ENCODE measurements at regions of chr7 and their contacts with region 1.

Region 1: GRCh38 chr7:112206238-112207044 is at the starts of genes DOCK4 and ZNF277:
- DNase-seq: peak; percentile 97
- ATAC-seq: peak; percentile 92
- H3K4me3 ChIP-seq: peak within 1 kb of the TSS; percentile 96 to 98 (median 96)
- H3K27ac ChIP-seq: peak within 1 kb of the TSS; percentile 84
- H3K4me1 ChIP-seq: peaks cover 60% of the 10 kb centered on the region
- H3K27me3 ChIP-seq: no peaks in the 10 kb centered on the region; a peak in 1 of 5 replicates
- CTCF ChIP-seq: peak; percentile 42
- EP300 ChIP-seq: peak in 1 of 2 experiments; percentile 31; a peak in 1 of 4 replicates
- POLR2A ChIP-seq: peak; percentile 72 to 73
- RAD21 ChIP-seq: peak; percentile 52
- total RNA-seq, gene DOCK4: 13.5 and 19.1 TPM in 2 replicates
- total RNA-seq, gene ZNF277: 30.1 and 44.8 TPM in 2 replicates

Region 2: DNA sequence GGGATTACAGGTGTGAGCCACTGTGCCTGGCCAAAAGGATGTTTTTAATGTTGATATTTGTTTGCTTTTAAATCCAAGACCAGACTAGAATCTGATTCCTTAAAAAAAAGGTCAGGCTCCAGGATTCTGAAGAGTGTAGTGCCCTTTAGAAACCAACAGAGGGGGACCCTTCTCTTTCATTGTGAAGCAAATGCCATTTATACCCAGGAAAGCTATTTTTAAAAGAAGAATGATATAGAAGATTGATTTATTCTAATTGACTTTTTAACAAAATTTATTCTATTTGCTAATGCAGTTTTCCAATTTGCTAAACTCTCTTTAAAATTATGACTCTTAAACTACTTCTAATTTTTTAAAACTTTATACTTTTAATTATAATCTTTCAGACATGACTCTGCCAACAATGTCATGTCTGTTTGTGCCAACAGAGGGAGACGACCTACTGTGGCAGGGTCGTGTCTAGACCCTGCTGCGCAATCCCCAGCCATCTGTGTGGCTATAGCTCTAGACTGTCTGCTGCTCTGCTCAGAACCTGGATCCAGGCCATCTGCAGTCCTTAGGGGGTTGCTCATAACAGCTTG is 443.1 kb before region 1 on chr7:
- CTCF ChIA-PET with region 1: no interaction called
- POLR2A ChIA-PET with region 1: no interaction called
- in situ Hi-C with region 1: no loop called
- intact Hi-C with region 1: loop called (anchors 2 kb)
- DNase-seq: peak; percentile 42
- ATAC-seq: peak; percentile 90
- H3K4me3 ChIP-seq: no peak overlapping the region
- H3K27ac ChIP-seq: no peak overlapping the region
- H3K4me1 ChIP-seq: no peaks in the 10 kb centered on the region
- H3K27me3 ChIP-seq: no peaks in the 10 kb centered on the region; a peak in 1 of 5 replicates
- CTCF ChIP-seq: no peak
- EP300 ChIP-seq: no peak
- POLR2A ChIP-seq: no peak
- RAD21 ChIP-seq: peak; percentile 15; the same call in 1 of the 2 replicates

Region 3: GRCh38 chr7:111953611-111954010 is 252.8 kb before region 1 on chr7:
- CTCF ChIA-PET with region 1: no interaction called
- POLR2A ChIA-PET with region 1: no interaction called
- in situ Hi-C with region 1: no loop called
- intact Hi-C with region 1: loop called (anchors 5 kb)
- DNase-seq: peak; percentile 77
- ATAC-seq: peak; percentile 98
- H3K4me3 ChIP-seq: no peak overlapping the region
- H3K27ac ChIP-seq: no peak overlapping the region
- H3K4me1 ChIP-seq: peaks cover 16% of the 10 kb centered on the region
- H3K27me3 ChIP-seq: no peaks in the 10 kb centered on the region
- CTCF ChIP-seq: peak; percentile 73
- EP300 ChIP-seq: no peak
- POLR2A ChIP-seq: no peak
- RAD21 ChIP-seq: no peak

Region 4: DNA sequence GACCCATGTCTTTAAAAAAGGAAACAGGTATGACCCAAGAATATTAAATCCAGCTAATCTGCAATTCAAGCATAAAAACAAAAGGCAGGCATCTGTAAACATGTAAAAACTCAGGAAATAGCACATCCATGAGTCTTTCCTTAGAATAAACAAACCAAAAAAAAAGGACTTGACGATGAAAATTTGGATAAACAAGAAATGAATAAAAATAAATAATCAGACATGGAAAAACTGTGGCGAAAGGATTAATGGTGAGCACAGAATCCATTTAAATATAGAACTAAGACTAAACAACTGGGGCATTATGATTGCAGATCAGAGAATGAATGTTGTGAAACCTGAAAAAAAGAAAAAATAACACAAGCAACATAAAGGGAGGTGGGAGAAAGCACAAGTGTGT is 170.4 kb before region 1 on chr7:
- CTCF ChIA-PET with region 1: no interaction called
- POLR2A ChIA-PET with region 1: no interaction called
- in situ Hi-C with region 1: no loop called
- intact Hi-C with region 1: no loop called
- DNase-seq: no peak
- ATAC-seq: no peak
- H3K4me3 ChIP-seq: no peak overlapping the region
- H3K27ac ChIP-seq: no peak overlapping the region
- H3K4me1 ChIP-seq: peaks cover 1% of the 10 kb centered on the region
- H3K27me3 ChIP-seq: no peaks in the 10 kb centered on the region
- CTCF ChIP-seq: no peak
- EP300 ChIP-seq: no peak
- POLR2A ChIP-seq: no peak
- RAD21 ChIP-seq: no peak

Region 5: DNA sequence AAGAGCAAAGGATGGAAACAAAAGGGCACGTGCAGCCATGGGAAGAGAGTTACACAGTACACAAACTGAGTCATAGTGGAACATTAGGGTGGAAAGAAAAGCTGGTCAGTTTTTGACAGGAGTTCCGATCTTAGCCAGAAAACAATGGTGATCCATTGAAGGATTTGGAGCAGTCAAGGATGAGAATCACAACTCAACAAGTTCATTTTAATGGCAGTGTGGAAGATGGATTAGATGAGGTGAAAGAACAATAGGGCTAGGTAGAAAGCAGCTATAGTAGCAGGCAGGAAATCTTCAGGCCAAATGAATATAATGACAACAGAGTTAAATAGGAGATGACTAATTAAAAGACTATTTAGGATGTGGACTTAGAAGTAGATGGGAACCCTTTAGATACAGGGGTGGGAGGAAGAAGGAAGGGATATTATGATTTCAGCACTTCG is 136.5 kb before region 1 on chr7:
- CTCF ChIA-PET with region 1: no interaction called
- POLR2A ChIA-PET with region 1: no interaction called
- in situ Hi-C with region 1: no loop called
- intact Hi-C with region 1: loop called (anchors 5 kb)
- DNase-seq: no peak
- ATAC-seq: no peak
- H3K4me3 ChIP-seq: no peak overlapping the region
- H3K27ac ChIP-seq: no peak overlapping the region
- H3K4me1 ChIP-seq: peaks cover 40% of the 10 kb centered on the region
- H3K27me3 ChIP-seq: no peaks in the 10 kb centered on the region
- CTCF ChIP-seq: no peak
- EP300 ChIP-seq: no peak
- POLR2A ChIP-seq: no peak
- RAD21 ChIP-seq: no peak

Region 6: GRCh38 chr7:112143582-112143981 is 62.9 kb before region 1 on chr7:
- CTCF ChIA-PET with region 1: no interaction called
- POLR2A ChIA-PET with region 1: no interaction called
- in situ Hi-C with region 1: no loop called
- intact Hi-C with region 1: no loop called
- DNase-seq: no peak
- ATAC-seq: no peak
- H3K4me3 ChIP-seq: no peak overlapping the region
- H3K27ac ChIP-seq: no peak overlapping the region
- H3K4me1 ChIP-seq: no peaks in the 10 kb centered on the region
- H3K27me3 ChIP-seq: no peaks in the 10 kb centered on the region
- CTCF ChIP-seq: no peak
- EP300 ChIP-seq: no peak
- POLR2A ChIP-seq: no peak
- RAD21 ChIP-seq: no peak

Region 7: GRCh38 chr7:112160130-112160590 is 46.3 kb before region 1 on chr7:
- CTCF ChIA-PET with region 1: no interaction called
- POLR2A ChIA-PET with region 1: interaction called, 4 read pairs
- in situ Hi-C with region 1: no loop called
- intact Hi-C with region 1: loop called (anchors 2 kb)
- DNase-seq: peak; percentile 57
- ATAC-seq: peak; percentile 77
- H3K4me3 ChIP-seq: peak overlapping the region; percentile 15 to 37 (median 24); a peak in 3 of 6 replicates
- H3K27ac ChIP-seq: peak overlapping the region; percentile 36
- H3K4me1 ChIP-seq: peaks cover 43% of the 10 kb centered on the region
- H3K27me3 ChIP-seq: no peaks in the 10 kb centered on the region
- CTCF ChIP-seq: no peak
- EP300 ChIP-seq: no peak
- POLR2A ChIP-seq: no peak
- RAD21 ChIP-seq: no peak

Region 8: GRCh38 chr7:112331492-112331891 is 125.1 kb after region 1 on chr7:
- CTCF ChIA-PET with region 1: no interaction called
- POLR2A ChIA-PET with region 1: no interaction called
- in situ Hi-C with region 1: no loop called
- intact Hi-C with region 1: loop called (anchors 5 kb)
- DNase-seq: peak; percentile 63
- ATAC-seq: peak; percentile 89
- H3K4me3 ChIP-seq: no peak overlapping the region
- H3K27ac ChIP-seq: peak overlapping the region; percentile 57
- H3K4me1 ChIP-seq: peaks cover 27% of the 10 kb centered on the region
- H3K27me3 ChIP-seq: no peaks in the 10 kb centered on the region
- CTCF ChIP-seq: no peak
- EP300 ChIP-seq: no peak
- POLR2A ChIP-seq: no peak
- RAD21 ChIP-seq: no peak

Region 9: GRCh38 chr7:112414855-112415490 is 208.5 kb after region 1 on chr7:
- CTCF ChIA-PET with region 1: no interaction called
- POLR2A ChIA-PET with region 1: no interaction called
- in situ Hi-C with region 1: no loop called
- intact Hi-C with region 1: loop called (anchors 10 kb)
- DNase-seq: peak; percentile 42
- ATAC-seq: peak; percentile 80
- H3K4me3 ChIP-seq: no peak overlapping the region
- H3K27ac ChIP-seq: no peak overlapping the region
- H3K4me1 ChIP-seq: peaks cover 32% of the 10 kb centered on the region
- H3K27me3 ChIP-seq: no peaks in the 10 kb centered on the region
- CTCF ChIP-seq: peak; percentile 75
- EP300 ChIP-seq: no peak
- POLR2A ChIP-seq: no peak
- RAD21 ChIP-seq: peak; percentile 36; the same call in 1 of the 2 replicates